Caco-2 (cell line): ENCODE measurements at regions of chr10 and their contacts with region 1.

Region 1: GRCh38 chr10:64379898-64380297 is 858.7 kb downstream of the REEP3 start:
- DNase-seq: peak; percentile 62 to 68
- H3K4me3 ChIP-seq: no peak overlapping the region
- H3K4me3 Mint-ChIP-seq: no peak overlapping the region
- H3K27ac Mint-ChIP-seq: no peak overlapping the region
- H3K4me1 ChIP-seq: peaks cover 7% of the 10 kb centered on the region
- H3K4me1 Mint-ChIP-seq: peaks cover 6% of the 10 kb centered on the region
- H3K27me3 ChIP-seq: no peaks in the 10 kb centered on the region
- H3K27me3 Mint-ChIP-seq: no peaks in the 10 kb centered on the region
- CTCF ChIP-seq: peak; percentile 60 to 80

Region 2: DNA sequence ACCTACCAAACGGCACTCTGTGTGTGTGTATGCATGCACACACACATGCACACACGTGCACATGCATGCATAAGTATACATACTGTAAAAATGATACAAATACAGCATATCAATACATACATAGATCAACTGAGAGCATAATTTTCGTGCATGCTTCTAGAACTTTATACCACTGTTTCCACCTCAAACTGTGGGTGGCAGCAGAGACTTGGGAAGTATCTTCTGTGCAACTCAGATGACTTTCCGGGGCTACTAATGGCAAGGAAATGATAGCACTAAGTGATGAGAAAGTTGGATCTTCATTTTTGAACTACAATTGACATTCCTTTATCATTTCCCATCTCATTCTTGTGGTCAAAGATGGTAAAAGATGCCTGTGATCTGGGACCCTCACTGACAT is 288.0 kb before region 1 on chr10:
- CTCF ChIA-PET with region 1: no interaction called
- POLR2A ChIA-PET with region 1: no interaction called
- intact Hi-C with region 1: loop called (anchors 1 kb)
- DNase-seq: peak; percentile 48 to 53
- H3K4me3 ChIP-seq: no peak overlapping the region
- H3K4me3 Mint-ChIP-seq: no peak overlapping the region
- H3K27ac Mint-ChIP-seq: no peak overlapping the region
- H3K4me1 ChIP-seq: no peaks in the 10 kb centered on the region
- H3K4me1 Mint-ChIP-seq: no peaks in the 10 kb centered on the region
- H3K27me3 ChIP-seq: no peaks in the 10 kb centered on the region
- H3K27me3 Mint-ChIP-seq: no peaks in the 10 kb centered on the region
- CTCF ChIP-seq: peak; percentile 61 to 66

Region 3: DNA sequence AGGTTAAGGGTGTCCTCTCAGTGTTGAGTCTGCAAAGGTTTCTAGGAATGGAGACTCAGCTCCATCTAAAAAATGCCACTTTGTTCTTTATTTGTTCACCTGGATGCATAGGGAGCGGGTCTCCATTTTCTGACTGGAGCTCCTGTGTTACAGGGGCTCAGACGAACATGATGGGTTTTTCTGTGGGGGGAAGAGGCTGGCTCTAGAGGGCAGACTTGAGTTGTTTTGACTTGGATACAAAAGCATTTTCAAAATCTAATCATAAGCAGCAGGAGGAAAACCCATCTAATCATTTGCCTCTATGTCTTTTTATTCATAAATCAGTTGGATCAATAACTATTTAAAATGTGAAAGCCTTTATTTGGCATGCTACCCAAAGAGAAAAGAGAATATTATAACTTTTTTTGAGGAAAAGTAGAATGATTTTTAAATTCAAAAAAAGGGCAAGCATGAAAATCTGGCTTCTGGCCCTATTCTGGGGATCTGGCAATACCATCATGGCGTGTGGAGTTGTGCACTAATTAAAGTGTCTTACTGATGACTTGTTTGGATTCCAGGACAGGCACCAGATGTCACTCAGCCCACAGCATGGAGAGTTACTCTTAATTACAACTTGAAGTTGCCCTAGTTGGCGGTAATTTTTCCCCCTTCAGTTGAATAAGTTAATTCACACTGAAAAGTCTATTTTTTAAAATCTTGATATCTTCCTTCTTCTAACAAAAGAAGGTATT is 263.8 kb before region 1 on chr10:
- CTCF ChIA-PET with region 1: interaction called, 11 read pairs
- POLR2A ChIA-PET with region 1: no interaction called
- intact Hi-C with region 1: loop called (anchors 1 kb)
- DNase-seq: peak in 1 of 2 experiments; percentile 49
- H3K4me3 ChIP-seq: no peak overlapping the region
- H3K4me3 Mint-ChIP-seq: no peak overlapping the region
- H3K27ac Mint-ChIP-seq: no peak overlapping the region
- H3K4me1 ChIP-seq: peaks cover 19% of the 10 kb centered on the region
- H3K4me1 Mint-ChIP-seq: peaks cover 14% of the 10 kb centered on the region
- H3K27me3 ChIP-seq: no peaks in the 10 kb centered on the region
- H3K27me3 Mint-ChIP-seq: peaks cover 5% of the 10 kb centered on the region
- CTCF ChIP-seq: peak; percentile 36 to 76

Region 4: DNA sequence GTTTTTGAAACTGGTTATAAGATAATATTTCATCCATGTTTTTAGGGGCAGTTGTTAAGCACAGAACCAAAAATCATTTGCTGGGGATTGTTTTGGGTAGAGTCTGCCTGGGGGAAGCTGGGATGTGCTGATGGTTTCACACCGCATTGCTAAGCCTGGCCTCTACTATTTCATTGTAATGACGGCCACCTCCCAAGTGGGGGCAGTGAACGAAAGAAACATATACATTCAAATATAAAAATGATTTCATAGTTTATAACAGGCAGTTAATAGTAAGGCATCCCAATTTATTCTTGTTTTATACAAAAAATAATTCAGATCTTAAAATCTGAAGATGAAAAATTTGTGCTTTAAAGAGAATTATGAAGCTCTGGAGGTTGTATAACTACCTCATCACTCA is 107.9 kb before region 1 on chr10:
- CTCF ChIA-PET with region 1: interaction called, 3 read pairs
- POLR2A ChIA-PET with region 1: no interaction called
- intact Hi-C with region 1: loop called (anchors 2 kb)
- DNase-seq: peak in 1 of 2 experiments; percentile 16
- H3K4me3 ChIP-seq: no peak overlapping the region
- H3K4me3 Mint-ChIP-seq: no peak overlapping the region
- H3K27ac Mint-ChIP-seq: no peak overlapping the region
- H3K4me1 ChIP-seq: no peaks in the 10 kb centered on the region
- H3K4me1 Mint-ChIP-seq: no peaks in the 10 kb centered on the region
- H3K27me3 ChIP-seq: no peaks in the 10 kb centered on the region
- H3K27me3 Mint-ChIP-seq: peaks cover 7% of the 10 kb centered on the region
- CTCF ChIP-seq: peak; percentile 42 to 46

Region 5: DNA sequence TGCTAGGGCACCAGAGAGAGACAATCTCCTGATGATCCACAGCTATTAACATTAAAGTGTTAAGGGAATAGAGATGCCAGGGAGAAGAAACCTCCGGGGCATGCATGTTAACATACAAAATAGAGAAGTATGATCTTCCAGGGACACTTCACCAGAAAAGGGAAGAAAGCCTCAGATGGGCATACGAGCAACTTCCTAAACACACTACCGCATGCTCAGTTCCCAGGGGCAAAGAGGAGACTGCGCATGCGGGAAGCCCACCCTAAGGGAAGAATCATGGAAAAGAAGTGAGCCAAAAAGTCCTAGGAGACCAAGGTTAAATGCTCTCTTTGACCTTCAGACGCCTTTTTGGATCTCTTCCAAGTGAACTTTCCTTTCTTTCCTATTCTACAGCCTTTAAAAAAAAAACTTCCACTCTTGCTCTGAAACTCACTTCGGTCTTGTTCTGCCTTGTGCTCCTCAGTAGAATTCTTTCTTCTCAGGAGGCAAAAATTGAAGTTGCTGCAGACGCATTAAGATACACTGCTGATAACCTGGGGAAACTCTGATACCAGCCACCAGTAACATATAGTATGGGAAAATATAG is 352.6 kb after region 1 on chr10:
- CTCF ChIA-PET with region 1: no interaction called
- POLR2A ChIA-PET with region 1: no interaction called
- intact Hi-C with region 1: no loop called
- DNase-seq: no peak
- H3K4me3 ChIP-seq: no peak overlapping the region
- H3K4me3 Mint-ChIP-seq: no peak overlapping the region
- H3K27ac Mint-ChIP-seq: peak overlapping the region; percentile 59
- H3K4me1 ChIP-seq: peaks cover 19% of the 10 kb centered on the region
- H3K4me1 Mint-ChIP-seq: peaks cover 11% of the 10 kb centered on the region
- H3K27me3 ChIP-seq: no peaks in the 10 kb centered on the region
- H3K27me3 Mint-ChIP-seq: no peaks in the 10 kb centered on the region
- CTCF ChIP-seq: no peak